Activated CD4-positive, alpha-beta T cell treated with anti-CD3 and anti-CD28 coated beads for 36 hours (primary cell): ENCODE measurements at regions of chr20 and their contacts with region 1.

Region 1: GRCh38 chr20:34768096-34768495 is 57.4 kb downstream of the NCOA6 start:
- DNase-seq: no peak
- ATAC-seq: no peak
- H3K4me3 Mint-ChIP-seq: no peak overlapping the region
- H3K27ac Mint-ChIP-seq: no peak overlapping the region
- H3K4me1 Mint-ChIP-seq: no peaks in the 10 kb centered on the region
- H3K27me3 Mint-ChIP-seq: no peaks in the 10 kb centered on the region

Region 2: GRCh38 chr20:34180460-34181120 is 587.5 kb before region 1 on chr20:
- CTCF ChIA-PET with region 1: no interaction called
- POLR2A ChIA-PET with region 1: no interaction called
- intact Hi-C with region 1: loop called in 1 of 2 experiments (anchors 10 kb)
- DNase-seq: no peak
- ATAC-seq: no peak
- H3K4me3 Mint-ChIP-seq: no peak overlapping the region
- H3K27ac Mint-ChIP-seq: no peak overlapping the region
- H3K4me1 Mint-ChIP-seq: no peaks in the 10 kb centered on the region
- H3K27me3 Mint-ChIP-seq: peaks cover 6% of the 10 kb centered on the region

Region 3: DNA sequence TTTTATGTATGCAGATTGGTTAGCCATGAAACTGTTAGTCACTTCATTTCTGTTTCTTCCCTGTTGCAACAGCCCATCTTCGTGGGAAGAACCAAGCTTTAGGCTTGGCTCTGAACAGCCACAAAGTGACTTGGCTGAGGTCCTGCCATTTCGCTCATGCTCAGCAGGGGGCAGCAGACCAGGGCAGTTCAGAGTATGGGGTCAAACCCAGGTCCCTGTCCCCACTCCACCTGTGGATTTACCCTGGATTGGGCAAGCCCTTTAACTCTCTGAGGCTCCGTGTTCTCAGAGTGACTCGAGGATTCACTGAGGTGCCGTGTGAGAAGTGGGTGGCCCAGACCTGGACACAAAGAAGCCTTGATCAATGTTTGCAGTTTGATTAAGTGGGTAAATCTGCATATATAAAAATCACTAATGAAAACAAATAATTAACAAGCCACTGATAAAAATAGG is 229.4 kb before region 1 on chr20:
- CTCF ChIA-PET with region 1: interaction called, 17 read pairs
- POLR2A ChIA-PET with region 1: no interaction called
- intact Hi-C with region 1: loop called (anchors 1 to 5 kb)
- DNase-seq: peak; percentile 78
- ATAC-seq: peak; percentile 61
- H3K4me3 Mint-ChIP-seq: no peak overlapping the region
- H3K27ac Mint-ChIP-seq: no peak overlapping the region
- H3K4me1 Mint-ChIP-seq: peaks cover 7% of the 10 kb centered on the region
- H3K27me3 Mint-ChIP-seq: no peaks in the 10 kb centered on the region

Region 4: DNA sequence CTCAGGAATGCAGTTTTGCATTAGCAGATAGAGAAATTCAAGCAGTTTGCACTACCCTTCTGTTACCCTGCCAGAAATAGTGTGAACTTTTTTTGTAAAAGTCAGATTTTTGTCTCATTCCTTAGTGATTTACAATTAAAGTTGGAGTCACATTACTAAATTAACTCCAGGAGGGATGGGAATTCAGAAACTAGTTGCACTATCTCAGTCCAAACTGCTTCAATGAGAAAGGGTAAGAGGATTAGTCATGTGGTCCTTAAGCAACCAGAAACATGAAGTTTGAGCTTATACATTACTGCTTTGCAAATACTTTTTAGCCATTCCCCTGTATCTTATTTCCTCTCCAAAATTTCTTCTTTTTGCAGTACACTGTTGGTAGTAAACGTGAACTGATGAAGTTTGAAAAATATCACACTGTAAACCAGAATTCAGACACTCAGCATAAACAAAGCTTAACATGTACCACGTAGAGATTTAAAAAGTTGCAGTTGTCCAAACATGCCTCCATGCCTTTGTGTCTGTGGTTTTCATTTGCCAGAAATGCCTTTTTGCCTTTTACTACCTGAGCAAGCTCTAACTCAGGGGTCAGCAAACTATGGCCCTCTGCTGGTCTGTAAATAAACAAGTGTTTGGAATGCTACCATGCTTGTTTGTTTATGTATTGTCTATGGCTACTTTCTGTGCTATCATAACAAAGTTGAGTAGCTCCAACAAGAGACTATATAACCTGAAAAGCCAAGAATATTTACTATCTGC is 14.2 kb before region 1 on chr20:
- CTCF ChIA-PET with region 1: interaction called, 19 read pairs
- POLR2A ChIA-PET with region 1: interaction called, 4 read pairs
- intact Hi-C with region 1: no loop called
- DNase-seq: no peak
- ATAC-seq: no peak
- H3K4me3 Mint-ChIP-seq: no peak overlapping the region
- H3K27ac Mint-ChIP-seq: no peak overlapping the region
- H3K4me1 Mint-ChIP-seq: peaks cover 4% of the 10 kb centered on the region
- H3K27me3 Mint-ChIP-seq: no peaks in the 10 kb centered on the region

Region 5: GRCh38 chr20:34781220-34781619 is 13.1 kb after region 1 on chr20:
- CTCF ChIA-PET with region 1: interaction called, 19 read pairs
- POLR2A ChIA-PET with region 1: no interaction called
- intact Hi-C with region 1: no loop called
- DNase-seq: no peak
- ATAC-seq: no peak
- H3K4me3 Mint-ChIP-seq: no peak overlapping the region
- H3K27ac Mint-ChIP-seq: no peak overlapping the region
- H3K4me1 Mint-ChIP-seq: peaks cover 2% of the 10 kb centered on the region
- H3K27me3 Mint-ChIP-seq: no peaks in the 10 kb centered on the region